Ovary (tissue), 10 donors: ENCODE measurements at regions of chr4 and their contacts with region 1.

Region 1: GRCh38 chr4:40736910-40737309 is 12.8 kb upstream of the NSUN7 start:
- DNase-seq: no peak
- H3K4me3 ChIP-seq: no peak overlapping the region
- H3K27ac ChIP-seq: no peak overlapping the region
- H3K4me1 ChIP-seq: no peaks in the 10 kb centered on the region
- H3K27me3 ChIP-seq: no peaks in the 10 kb centered on the region
- CTCF ChIP-seq: no peak
- EP300 ChIP-seq: no peak
- POLR2A ChIP-seq: no peak

Region 2: DNA sequence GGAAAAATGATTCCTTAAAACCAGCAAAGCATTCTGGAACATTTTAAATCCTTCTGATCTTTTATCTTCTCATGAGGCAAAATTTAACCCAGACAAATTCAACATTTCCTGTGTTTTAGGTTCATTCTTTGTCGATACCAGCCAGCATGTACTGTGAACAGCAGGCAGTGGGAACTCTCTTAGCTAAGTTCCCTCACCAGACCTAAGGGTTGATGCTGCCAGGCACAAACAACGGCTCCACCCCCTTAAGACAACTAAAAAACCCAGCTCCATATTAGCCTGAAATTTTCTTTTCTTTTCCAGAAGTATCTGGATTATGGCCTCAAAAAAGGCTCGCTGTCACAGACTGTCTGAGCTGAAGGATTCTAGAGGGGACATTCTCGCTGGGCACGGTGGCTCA is 104.8 kb before region 1 on chr4:
- intact Hi-C with region 1: no loop called
- DNase-seq: peak in 1 of 5 donors; percentile 23
- H3K4me3 ChIP-seq: no peak overlapping the region
- H3K27ac ChIP-seq: no peak overlapping the region
- H3K4me1 ChIP-seq: peaks cover 2% of the 10 kb centered on the region
- H3K27me3 ChIP-seq: no peaks in the 10 kb centered on the region
- CTCF ChIP-seq: no peak
- EP300 ChIP-seq: no peak
- POLR2A ChIP-seq: no peak

Region 3: GRCh38 chr4:40755616-40756015 is 18.7 kb after region 1 on chr4:
- intact Hi-C with region 1: loop called in 1 of 4 experiments (anchors 1 kb)
- DNase-seq: no peak
- H3K4me3 ChIP-seq: no peak overlapping the region
- H3K27ac ChIP-seq: no peak overlapping the region
- H3K4me1 ChIP-seq: no peaks in the 10 kb centered on the region
- H3K27me3 ChIP-seq: no peaks in the 10 kb centered on the region
- CTCF ChIP-seq: no peak
- EP300 ChIP-seq: no peak
- POLR2A ChIP-seq: no peak

Region 4: DNA sequence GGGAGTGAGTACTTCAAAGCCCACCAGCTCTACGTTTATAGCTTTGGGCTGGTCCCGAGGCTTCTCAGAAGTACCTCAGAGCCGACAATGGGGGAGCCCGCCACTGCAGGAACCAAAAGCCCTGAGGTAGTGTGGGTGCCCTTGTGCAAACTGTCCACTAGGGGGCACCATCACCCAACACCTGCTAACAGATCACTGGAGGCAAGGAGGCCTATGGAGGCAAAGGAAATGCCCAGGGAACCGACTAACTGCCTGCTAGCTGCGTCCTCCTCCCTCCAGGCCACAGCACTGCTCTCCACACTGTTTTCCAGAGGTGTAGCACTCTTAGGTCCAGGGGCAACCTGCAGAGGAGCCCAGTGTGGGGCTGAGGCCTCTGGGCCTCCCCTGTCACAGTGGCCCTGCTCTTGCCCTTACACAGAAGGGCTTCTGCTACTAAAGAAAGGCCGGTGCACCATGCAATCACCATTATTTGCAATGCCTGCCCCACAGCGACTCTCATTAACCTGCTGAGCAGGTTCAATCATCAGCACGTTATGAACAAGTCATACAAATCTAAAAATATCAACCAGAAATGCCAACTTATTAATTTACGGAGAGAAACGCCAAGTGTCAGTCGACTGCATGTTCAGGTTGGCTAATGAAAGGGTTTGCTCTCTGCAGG is 171.9 kb after region 1 on chr4:
- intact Hi-C with region 1: loop called in 1 of 4 experiments (anchors 10 kb)
- DNase-seq: peak; percentile 43 to 67 (median 63)
- H3K4me3 ChIP-seq: no peak overlapping the region
- H3K27ac ChIP-seq: no peak overlapping the region
- H3K4me1 ChIP-seq: no peaks in the 10 kb centered on the region
- H3K27me3 ChIP-seq: no peaks in the 10 kb centered on the region
- CTCF ChIP-seq: peak; percentile 41 to 74 (median 44)
- EP300 ChIP-seq: no peak
- POLR2A ChIP-seq: no peak